ENCODE measurements at regions of chr6 and their contacts with region 1.

Region 1: GRCh38 chr6:41027799-41028628 is 11.0 kb downstream of the UNC5CL start:
- DNase-seq: peak; percentile 84
- H3K4me3 Mint-ChIP-seq: peak overlapping the region; percentile 72
- H3K27ac Mint-ChIP-seq: peak overlapping the region; percentile 84
- H3K4me1 Mint-ChIP-seq: peaks cover 24% of the 10 kb centered on the region
- H3K27me3 Mint-ChIP-seq: no peaks in the 10 kb centered on the region

Region 2: GRCh38 chr6:40930555-40930954 is 97.5 kb before region 1 on chr6:
- CTCF ChIA-PET with region 1: no interaction called
- DNase-seq: no peak
- H3K4me3 Mint-ChIP-seq: no peak overlapping the region
- H3K27ac Mint-ChIP-seq: no peak overlapping the region
- H3K4me1 Mint-ChIP-seq: no peaks in the 10 kb centered on the region
- H3K27me3 Mint-ChIP-seq: peaks cover 24% of the 10 kb centered on the region

Region 3: DNA sequence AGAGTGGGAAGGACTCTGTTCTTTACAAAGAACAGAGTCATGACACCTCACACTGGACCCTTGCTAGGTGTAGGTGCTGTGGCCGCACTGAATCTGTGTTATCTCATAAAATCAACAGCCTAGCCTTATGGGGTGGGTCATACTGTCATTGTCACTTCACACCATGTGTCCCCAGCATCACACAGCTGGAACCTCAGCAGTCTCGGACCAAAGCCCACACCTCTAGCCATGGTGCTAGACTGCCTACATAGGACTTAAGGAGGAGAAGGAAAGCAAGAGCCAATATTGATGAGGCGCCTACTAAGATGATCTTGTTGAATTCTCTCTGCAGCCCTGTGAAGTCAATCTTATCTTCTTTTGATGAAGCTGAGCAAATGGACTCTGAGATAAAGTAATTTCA is 20.0 kb before region 1 on chr6:
- CTCF ChIA-PET with region 1: interaction called, 24 read pairs
- DNase-seq: no peak
- H3K4me3 Mint-ChIP-seq: no peak overlapping the region
- H3K27ac Mint-ChIP-seq: no peak overlapping the region
- H3K4me1 Mint-ChIP-seq: peaks cover 6% of the 10 kb centered on the region
- H3K27me3 Mint-ChIP-seq: peaks cover 52% of the 10 kb centered on the region

Region 4: DNA sequence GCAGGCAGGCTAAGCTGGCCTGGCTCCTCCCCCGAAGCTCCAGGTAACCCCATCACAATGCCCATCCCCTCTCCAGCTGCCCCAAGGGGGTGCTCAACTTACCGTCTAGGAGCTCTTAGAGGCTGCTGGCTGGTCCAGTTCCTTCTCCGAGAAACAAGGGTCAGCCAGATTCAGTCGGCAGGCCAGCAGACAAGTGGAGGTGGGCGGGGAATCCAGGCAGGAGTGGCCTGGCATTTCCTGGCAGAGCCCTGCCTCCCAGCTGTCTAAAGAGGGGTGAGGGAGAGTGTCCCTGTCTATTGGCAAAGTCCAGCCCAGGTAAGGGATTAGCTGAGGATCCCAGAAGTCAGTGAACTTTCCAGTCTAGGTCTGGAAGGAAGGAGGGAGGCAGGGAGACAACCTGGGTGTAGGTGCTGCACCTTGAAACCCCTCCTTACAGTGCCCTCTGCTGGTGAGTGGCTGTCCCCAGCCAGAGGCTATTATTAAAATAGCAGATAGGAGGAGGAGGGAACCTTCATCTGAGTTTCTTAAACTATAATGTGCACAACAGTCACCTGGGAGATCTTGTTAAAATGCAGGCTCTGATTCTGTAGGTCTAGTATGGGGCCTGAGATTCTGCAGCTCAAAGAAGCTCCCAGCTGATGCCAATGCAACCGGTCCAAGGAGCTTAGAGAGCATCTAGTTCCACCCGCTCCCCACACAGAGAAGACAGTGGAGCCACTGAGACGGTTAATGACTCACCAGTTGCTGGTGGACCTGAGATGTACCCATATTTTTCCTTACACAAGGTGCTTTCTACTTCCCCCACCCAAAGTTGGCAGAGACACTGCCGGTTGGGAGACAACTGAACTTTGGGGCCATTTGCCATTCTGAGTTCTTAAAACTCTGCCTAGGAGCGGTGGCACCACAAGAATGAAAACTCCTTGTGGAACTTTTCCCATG is 11.3 kb after region 1 on chr6 and contains the start of gene UNC5CL:
- CTCF ChIA-PET with region 1: interaction called, 113 read pairs
- DNase-seq: peak; percentile 81
- H3K4me3 Mint-ChIP-seq: no peak within 1 kb of the TSS
- H3K27ac Mint-ChIP-seq: no peak within 1 kb of the TSS
- H3K4me1 Mint-ChIP-seq: peaks cover 13% of the 10 kb centered on the region
- H3K27me3 Mint-ChIP-seq: peaks cover 4% of the 10 kb centered on the region

Region 5: DNA sequence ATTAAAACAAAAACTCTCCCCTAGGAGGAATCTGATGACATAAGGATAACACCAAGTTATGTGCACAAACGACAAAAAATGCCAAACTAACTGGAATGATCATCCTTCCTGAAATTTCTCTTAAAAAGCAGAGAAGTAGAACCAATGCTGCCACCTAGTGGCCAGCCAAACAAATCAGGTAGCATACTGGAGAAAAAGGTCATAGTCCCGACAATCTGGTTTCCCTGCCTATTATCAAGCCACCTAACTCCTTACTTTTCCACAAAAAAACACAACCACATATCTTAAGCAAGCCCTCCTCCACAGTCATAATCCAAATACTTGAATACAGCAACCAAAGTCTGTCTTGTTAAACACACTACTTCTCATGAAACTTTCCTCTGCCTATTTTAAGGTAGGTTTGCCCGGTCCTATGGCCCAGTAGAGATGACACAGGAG is 38.9 kb after region 1 on chr6:
- CTCF ChIA-PET with region 1: interaction called, 15 read pairs
- DNase-seq: peak; percentile 76
- H3K4me3 Mint-ChIP-seq: no peak overlapping the region
- H3K27ac Mint-ChIP-seq: no peak overlapping the region
- H3K4me1 Mint-ChIP-seq: peaks cover 64% of the 10 kb centered on the region
- H3K27me3 Mint-ChIP-seq: no peaks in the 10 kb centered on the region

Measured in activated naive CD4-positive, alpha-beta T cell treated with anti-CD3 and anti-CD28 coated beads, Interleukin-2, amount 10 ng/mL, durations not matched to agents 7 days and 5 days (primary cell).